Vagina (tissue), 2 donors: ENCODE measurements at regions of chr17 and their contacts with region 1.

Region 1: GRCh38 chr17:73369111-73369521 is 57.3 kb upstream of the CDC42EP4 start:
- DNase-seq: no peak
- H3K4me3 ChIP-seq: no peak overlapping the region
- H3K27ac ChIP-seq: no peak overlapping the region
- H3K4me1 ChIP-seq: no peaks in the 10 kb centered on the region
- H3K27me3 ChIP-seq: no peaks in the 10 kb centered on the region
- CTCF ChIP-seq: no peak
- POLR2A ChIP-seq: no peak

Region 2: DNA sequence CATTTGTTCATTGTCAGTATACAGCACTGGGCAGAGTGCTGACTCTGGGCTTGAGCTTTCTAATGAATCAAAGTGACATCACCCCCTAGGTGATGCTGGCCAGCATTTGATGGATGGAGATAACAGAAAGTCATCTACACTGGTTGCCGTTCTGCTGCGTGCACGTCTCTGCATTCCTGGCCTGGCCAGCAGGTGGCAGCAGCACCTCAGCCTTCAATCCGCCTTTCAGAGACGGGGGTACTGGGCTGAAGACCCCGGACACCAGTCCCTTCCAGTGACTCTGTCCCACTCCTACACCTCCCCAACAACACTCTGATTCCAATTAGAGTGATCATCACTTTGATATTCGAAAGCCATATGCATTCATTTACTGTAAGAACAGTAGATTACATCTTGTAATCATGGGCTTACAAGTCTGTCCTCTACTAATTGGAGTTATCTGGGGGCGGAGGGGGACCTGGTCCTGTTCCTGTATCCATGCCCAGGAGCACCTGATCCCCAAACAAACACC is 113.4 kb before region 1 on chr17:
- intact Hi-C with region 1: loop called (anchors 2 kb)
- DNase-seq: no peak
- H3K4me3 ChIP-seq: no peak overlapping the region
- H3K27ac ChIP-seq: no peak overlapping the region
- H3K4me1 ChIP-seq: no peaks in the 10 kb centered on the region
- H3K27me3 ChIP-seq: no peaks in the 10 kb centered on the region
- CTCF ChIP-seq: peak; percentile 98
- POLR2A ChIP-seq: no peak